ENCODE measurements at regions of chrX and their contacts with region 1.

Region 1: DNA sequence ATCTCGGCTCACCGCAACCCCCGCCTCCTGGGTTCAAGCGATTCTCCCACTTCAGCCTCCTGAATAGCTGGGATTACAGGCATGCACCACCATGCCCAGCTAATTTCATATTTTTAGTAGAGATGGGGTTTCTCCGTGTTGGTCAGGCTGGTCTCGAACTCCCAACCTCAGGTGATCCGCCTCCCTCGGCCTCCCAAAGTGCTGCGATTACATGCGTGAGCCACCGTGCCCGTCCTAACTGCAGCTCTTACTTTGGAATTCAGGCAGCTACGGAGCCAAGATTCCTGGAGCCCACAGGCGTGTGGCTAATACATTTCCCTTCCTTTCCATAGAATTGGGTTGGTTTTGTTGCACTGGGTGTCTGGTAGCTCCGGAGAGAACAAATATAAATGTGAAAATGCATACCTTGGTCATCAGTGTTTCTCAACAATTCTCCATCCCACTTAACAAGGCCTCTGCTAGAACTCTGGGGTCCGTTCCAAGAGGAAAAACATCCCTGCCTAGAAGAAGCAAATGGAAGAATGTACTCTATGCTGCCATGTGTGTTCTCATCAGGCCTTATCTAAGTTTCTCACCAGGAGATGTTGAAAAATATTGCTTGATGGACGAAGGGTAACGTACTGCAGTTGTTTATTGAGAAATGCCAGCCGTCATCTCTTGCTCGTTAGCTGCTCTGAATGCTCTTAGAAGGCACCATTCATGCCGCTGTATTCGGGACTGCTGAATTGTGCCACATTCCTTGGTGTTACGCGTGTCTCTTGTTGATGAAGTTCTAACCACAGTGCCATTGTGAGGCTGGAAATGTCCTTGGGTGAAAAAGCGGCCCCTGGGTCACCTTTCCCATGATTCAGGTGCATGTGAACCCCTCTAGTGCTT is 50.6 kb upstream of the CD99 start:
- DNase-seq: no peak
- ATAC-seq: no peak
- H3K4me3 ChIP-seq: no peak overlapping the region
- H3K4me3 Mint-ChIP-seq: no peak overlapping the region
- H3K27ac ChIP-seq: no peak overlapping the region
- H3K27ac Mint-ChIP-seq: no peak overlapping the region
- H3K4me1 ChIP-seq: no peaks in the 10 kb centered on the region
- H3K4me1 Mint-ChIP-seq: peaks cover 10 to 17% of the 10 kb centered on the region in 2 donors
- H3K27me3 ChIP-seq: no peaks in the 10 kb centered on the region
- H3K27me3 Mint-ChIP-seq: no peaks in the 10 kb centered on the region
- CTCF ChIP-seq: no peak

Region 2: GRCh38 chrX:2707334-2707760 is 66.8 kb after region 1 on chrX:
- intact Hi-C with region 1: loop called (anchors 5 kb)
- DNase-seq: peak; percentile 47 to 72
- ATAC-seq: peak; percentile 64 to 72 (median 69)
- H3K4me3 ChIP-seq: no peak overlapping the region
- H3K4me3 Mint-ChIP-seq: peak overlapping the region; percentile 65
- H3K27ac ChIP-seq: peak overlapping the region; percentile 40
- H3K27ac Mint-ChIP-seq: peak overlapping the region; percentile 82 to 87
- H3K4me1 ChIP-seq: peaks cover 70% of the 10 kb centered on the region
- H3K4me1 Mint-ChIP-seq: peaks cover 58 to 70% of the 10 kb centered on the region in 2 donors
- H3K27me3 ChIP-seq: no peaks in the 10 kb centered on the region
- H3K27me3 Mint-ChIP-seq: no peaks in the 10 kb centered on the region
- CTCF ChIP-seq: no peak

Region 3: DNA sequence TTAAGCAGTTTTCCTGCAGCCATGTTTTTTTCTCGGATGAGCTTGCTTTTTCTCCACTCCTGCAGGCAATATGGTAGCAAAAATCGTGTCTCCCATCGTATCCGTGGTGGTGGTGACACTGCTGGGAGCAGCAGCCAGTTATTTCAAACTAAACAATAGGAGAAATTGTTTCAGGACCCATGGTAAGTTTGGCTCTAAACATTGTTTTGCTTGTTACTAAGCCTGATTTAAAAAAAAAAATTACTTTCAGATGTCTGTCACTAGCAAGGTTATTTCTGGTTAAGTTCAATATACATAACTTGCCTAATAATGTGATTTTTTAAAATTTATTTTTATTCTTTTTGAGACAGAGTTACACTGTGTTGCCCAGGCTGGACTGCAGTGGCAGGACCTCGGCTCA is 170.8 kb after region 1 on chrX:
- intact Hi-C with region 1: loop called (anchors 1 kb)
- DNase-seq: no peak
- ATAC-seq: no peak
- H3K4me3 ChIP-seq: no peak overlapping the region
- H3K4me3 Mint-ChIP-seq: no peak overlapping the region
- H3K27ac ChIP-seq: no peak overlapping the region
- H3K27ac Mint-ChIP-seq: no peak overlapping the region
- H3K4me1 ChIP-seq: no peaks in the 10 kb centered on the region
- H3K4me1 Mint-ChIP-seq: peaks cover 0 to 4% of the 10 kb centered on the region in 2 donors
- H3K27me3 ChIP-seq: no peaks in the 10 kb centered on the region
- H3K27me3 Mint-ChIP-seq: peaks cover 3 to 20% of the 10 kb centered on the region in 2 donors
- CTCF ChIP-seq: no peak